Activated CD4-positive, alpha-beta memory T cell treated with anti-CD3 and anti-CD28 coated beads, Interleukin-2, amount 10 ng/mL, durations not matched to agents 7 days and 5 days (primary cell): ENCODE measurements at regions of chr1 and their contacts with region 1.

Region 1: DNA sequence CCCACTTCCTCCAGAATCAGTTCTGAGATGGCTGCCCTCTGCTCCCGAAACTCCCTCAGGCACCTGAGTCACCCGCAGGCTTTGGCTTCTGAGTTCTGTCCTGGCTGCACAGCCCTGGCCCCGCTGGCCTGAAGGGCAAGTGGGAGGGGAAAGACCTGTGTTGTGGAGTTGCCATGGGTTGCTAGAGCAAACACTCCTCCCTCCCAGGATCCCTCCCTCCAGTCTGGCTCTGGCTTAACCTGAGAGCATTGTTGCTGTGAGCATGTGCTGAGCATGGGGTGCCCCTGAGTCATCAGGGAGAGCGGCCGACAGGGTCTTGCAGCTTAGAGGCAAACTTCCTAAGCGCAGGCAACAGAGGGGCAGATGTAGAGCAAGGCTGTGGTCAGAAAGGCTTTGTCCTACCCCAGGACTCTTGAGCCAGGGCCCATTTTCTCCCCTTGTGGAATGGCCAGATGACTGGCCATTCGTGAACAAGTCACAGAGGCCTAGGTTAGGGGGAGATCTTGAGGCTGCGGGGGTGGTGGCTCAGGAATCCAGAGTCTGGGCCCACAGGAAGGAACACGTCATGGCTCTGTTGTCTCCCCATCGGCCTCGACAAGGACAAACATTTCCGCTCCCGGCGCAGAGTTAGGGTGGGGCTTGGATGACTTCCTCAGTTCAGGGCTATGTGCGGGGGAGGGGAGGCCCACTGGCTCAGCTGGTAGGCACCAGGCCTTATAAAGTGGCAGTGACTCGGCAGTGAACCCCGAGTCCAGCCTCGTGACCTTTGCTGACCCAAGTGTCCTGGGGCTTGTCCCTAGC is at the start of gene DYNLT4:
- DNase-seq: peak; percentile 93
- H3K4me3 Mint-ChIP-seq: peak within 1 kb of the TSS; percentile 73
- H3K27ac Mint-ChIP-seq: peak within 1 kb of the TSS; percentile 98
- H3K4me1 Mint-ChIP-seq: peaks cover 92% of the 10 kb centered on the region
- H3K27me3 Mint-ChIP-seq: no peaks in the 10 kb centered on the region
- total RNA-seq, gene DYNLT4: 1.9 to 2.2 TPM

Region 2: GRCh38 chr1:44780583-44781121 is 26.8 kb before region 1 on chr1:
- CTCF ChIA-PET with region 1: interaction called, 18 read pairs
- POLR2A ChIA-PET with region 1: interaction called, 87 read pairs
- DNase-seq: no peak
- H3K4me3 Mint-ChIP-seq: no peak overlapping the region
- H3K27ac Mint-ChIP-seq: peak overlapping the region; percentile 10
- H3K4me1 Mint-ChIP-seq: peaks cover 58% of the 10 kb centered on the region
- H3K27me3 Mint-ChIP-seq: no peaks in the 10 kb centered on the region

Region 3: GRCh38 chr1:44786138-44786840 is 21.2 kb before region 1 on chr1:
- CTCF ChIA-PET with region 1: interaction called, 18 read pairs
- POLR2A ChIA-PET with region 1: interaction called, 30 read pairs
- DNase-seq: peak; percentile 78
- H3K4me3 Mint-ChIP-seq: peak overlapping the region; percentile 59
- H3K27ac Mint-ChIP-seq: no peak overlapping the region
- H3K4me1 Mint-ChIP-seq: peaks cover 36% of the 10 kb centered on the region
- H3K27me3 Mint-ChIP-seq: no peaks in the 10 kb centered on the region

Region 4: GRCh38 chr1:44792783-44793714 is 14.4 kb before region 1 on chr1:
- CTCF ChIA-PET with region 1: interaction called, 16 read pairs
- POLR2A ChIA-PET with region 1: interaction called, 30 read pairs
- DNase-seq: no peak
- H3K4me3 Mint-ChIP-seq: no peak overlapping the region
- H3K27ac Mint-ChIP-seq: no peak overlapping the region
- H3K4me1 Mint-ChIP-seq: peaks cover 2% of the 10 kb centered on the region
- H3K27me3 Mint-ChIP-seq: no peaks in the 10 kb centered on the region

Region 5: DNA sequence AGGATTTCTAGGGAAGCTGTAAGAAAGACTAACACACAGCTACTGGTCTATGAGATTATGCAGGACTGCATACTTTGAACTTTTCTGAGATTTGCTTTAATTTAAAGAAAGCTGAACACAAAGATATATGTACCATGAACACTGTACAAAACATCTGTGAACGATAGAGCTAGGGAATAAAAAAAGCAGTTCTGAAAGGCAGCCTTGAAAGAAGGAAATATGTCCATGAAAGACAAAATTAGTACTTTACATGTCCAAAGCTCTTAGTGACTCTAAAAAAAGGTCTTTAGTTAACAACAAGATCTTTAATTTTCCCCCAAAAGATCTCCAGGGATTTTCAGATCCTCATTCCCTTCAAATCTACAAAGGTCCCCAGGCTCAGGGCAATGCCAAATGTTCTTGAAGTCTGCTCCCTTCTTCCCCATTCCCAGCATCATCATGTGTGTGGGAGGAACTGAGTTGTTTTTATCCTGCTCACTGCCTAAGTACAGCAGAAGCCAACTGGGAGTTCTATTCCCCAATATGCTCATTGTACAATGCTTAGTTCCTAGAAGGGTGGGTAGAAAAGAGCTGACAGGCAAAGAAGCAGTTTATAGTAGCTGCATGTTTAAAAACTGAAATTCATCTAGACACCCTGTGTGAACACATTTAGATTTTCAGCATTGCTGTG is 95.7 kb after region 1 on chr1:
- CTCF ChIA-PET with region 1: no interaction called
- POLR2A ChIA-PET with region 1: no interaction called
- DNase-seq: no peak
- H3K4me3 Mint-ChIP-seq: no peak overlapping the region
- H3K27ac Mint-ChIP-seq: no peak overlapping the region
- H3K4me1 Mint-ChIP-seq: no peaks in the 10 kb centered on the region
- H3K27me3 Mint-ChIP-seq: no peaks in the 10 kb centered on the region

Region 6: GRCh38 chr1:44985747-44986359 is 178.4 kb after region 1 on chr1:
- CTCF ChIA-PET with region 1: no interaction called
- POLR2A ChIA-PET with region 1: interaction called, 14 read pairs
- DNase-seq: no peak
- H3K4me3 Mint-ChIP-seq: peak overlapping the region; percentile 90
- H3K27ac Mint-ChIP-seq: peak overlapping the region; percentile 86
- H3K4me1 Mint-ChIP-seq: peaks cover 28% of the 10 kb centered on the region
- H3K27me3 Mint-ChIP-seq: peaks cover 2% of the 10 kb centered on the region